K562 (cell line): ENCODE measurements at regions of chr9 and their contacts with region 1.

Region 1: DNA sequence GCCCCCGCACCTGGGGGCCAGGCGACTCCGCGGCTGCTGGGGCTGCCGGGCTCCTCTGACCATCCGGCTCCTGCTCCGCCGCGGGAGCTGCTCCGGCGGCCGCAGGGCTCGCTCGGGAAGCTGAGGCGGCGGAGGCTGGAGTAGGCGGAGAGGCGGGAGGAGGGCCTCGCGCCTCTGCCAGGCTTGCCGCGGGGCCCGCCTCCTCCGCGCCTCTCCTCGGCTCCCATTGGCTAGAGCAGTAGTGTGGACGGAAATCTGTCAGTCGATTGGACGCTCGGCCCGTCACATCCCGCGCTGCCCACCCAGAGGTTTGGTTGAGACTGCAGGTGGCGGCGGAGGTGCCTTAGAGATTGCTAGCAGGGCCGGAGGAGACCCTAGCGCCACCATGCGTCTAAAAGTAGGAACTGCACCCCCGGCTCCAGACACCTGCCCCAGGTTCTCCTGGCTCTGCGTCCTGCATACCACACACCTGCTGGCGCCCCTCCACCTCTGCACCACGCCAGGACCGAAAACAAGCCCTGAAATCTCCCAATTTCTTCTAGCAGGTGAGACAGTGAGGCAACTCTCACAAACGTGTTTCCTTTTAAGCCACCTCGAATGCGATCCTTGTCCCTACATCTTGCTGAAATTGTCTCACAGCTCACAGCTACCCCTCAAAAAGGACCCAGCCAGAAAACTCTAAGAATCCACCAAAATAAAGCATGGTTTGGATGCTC is at the start of gene SCAI:
- DNase-seq: peak; percentile 98 to 99 (median 98)
- ATAC-seq: peak; percentile 100
- H3K4me3 ChIP-seq: peak within 1 kb of the TSS; percentile 56
- H3K27ac ChIP-seq: peak within 1 kb of the TSS; percentile 34; the same call in 1 of the 3 replicates
- H3K4me1 ChIP-seq: peaks cover 0 to 8% of the 10 kb centered on the region in 2 experiments; a peak in 3 of 5 replicates
- H3K27me3 ChIP-seq: no peaks in the 10 kb centered on the region
- CTCF ChIP-seq: peak; percentile 97 to 98 (median 97)
- EP300 ChIP-seq: no peak
- POLR2A ChIP-seq: no peak; the same call in 1 of the 2 replicates
- RAD21 ChIP-seq: peak; percentile 90 to 93
- polyA plus RNA-seq, gene SCAI: 0.70 to 0.84 TPM

Region 2: GRCh38 chr9:124852829-124853531 is 290.6 kb before region 1 on chr9 and contains the start of gene WDR38:
- CTCF ChIA-PET with region 1: interaction called, 4 read pairs
- POLR2A ChIA-PET with region 1: no interaction called
- in situ Hi-C with region 1: no loop called
- intact Hi-C with region 1: loop called (anchors 1 kb)
- DNase-seq: peak; percentile 83 to 92 (median 86)
- ATAC-seq: peak; percentile 90
- H3K4me3 ChIP-seq: peak within 1 kb of the TSS; percentile 36
- H3K27ac ChIP-seq: no peak within 1 kb of the TSS
- H3K4me1 ChIP-seq: peaks cover 0 to 46% of the 10 kb centered on the region in 2 experiments; a peak in 3 of 5 replicates
- H3K27me3 ChIP-seq: no peaks in the 10 kb centered on the region
- CTCF ChIP-seq: peak; percentile 77 to 98 (median 93)
- EP300 ChIP-seq: no peak
- POLR2A ChIP-seq: no peak
- RAD21 ChIP-seq: peak; percentile 99 to 100
- polyA plus RNA-seq, gene WDR38: not detected

Region 3: DNA sequence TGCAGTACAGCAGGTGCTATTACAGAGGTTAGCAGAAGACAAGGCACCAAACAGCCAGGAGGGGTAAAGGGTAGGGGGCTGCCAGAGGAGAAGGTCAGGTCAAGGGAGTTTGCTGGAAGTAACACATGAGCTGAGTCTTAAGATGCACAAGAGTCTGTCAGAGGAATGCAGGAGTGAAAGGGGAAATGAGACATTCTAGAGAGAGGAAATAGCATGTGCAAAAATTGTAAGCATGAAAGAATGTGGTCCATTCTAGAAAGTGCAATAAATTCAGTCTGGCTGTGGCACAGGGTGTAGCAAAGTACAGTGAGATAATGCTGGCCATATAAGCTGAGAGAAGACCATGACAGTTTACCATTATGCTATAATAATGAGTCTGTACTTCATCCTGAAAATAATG is 209.2 kb before region 1 on chr9:
- CTCF ChIA-PET with region 1: no interaction called
- POLR2A ChIA-PET with region 1: no interaction called
- in situ Hi-C with region 1: loop called (anchors 10 kb)
- intact Hi-C with region 1: no loop called
- DNase-seq: no peak
- ATAC-seq: no peak
- H3K4me3 ChIP-seq: no peak overlapping the region
- H3K27ac ChIP-seq: no peak overlapping the region
- H3K4me1 ChIP-seq: no peaks in the 10 kb centered on the region
- H3K27me3 ChIP-seq: no peaks in the 10 kb centered on the region
- CTCF ChIP-seq: no peak
- EP300 ChIP-seq: no peak
- POLR2A ChIP-seq: no peak
- RAD21 ChIP-seq: no peak

Region 4: DNA sequence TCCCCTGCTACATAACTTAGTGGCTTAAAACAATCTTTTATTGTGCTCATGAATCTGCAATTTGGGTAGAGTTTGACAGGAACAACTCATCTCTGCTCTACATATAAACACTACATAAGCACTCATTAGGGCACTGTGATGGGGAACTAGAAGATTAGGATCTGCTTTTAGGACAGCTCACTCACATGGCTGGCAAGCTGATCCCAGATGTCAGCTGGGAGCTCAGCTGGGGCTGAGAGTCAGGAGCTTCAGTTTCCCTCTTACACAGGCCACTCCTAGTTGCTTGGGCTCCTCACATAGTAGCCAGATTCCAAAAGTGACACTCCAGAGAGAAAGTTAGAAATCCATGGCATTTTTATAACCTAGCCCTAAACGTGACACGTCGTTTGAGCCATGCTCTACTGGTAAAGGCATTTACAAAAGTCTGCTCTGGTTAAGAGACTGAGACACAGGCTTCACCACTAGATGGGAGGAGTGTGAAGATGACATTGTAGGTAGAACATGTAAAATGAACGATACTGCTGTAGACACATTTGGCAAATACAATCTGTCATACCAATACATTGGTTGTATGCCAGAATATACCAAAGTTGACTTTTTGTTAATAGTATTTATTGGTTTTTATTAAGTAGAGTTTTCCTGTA is 23.8 kb before region 1 on chr9:
- CTCF ChIA-PET with region 1: interaction called, 3 read pairs
- POLR2A ChIA-PET with region 1: no interaction called
- in situ Hi-C with region 1: no loop called
- intact Hi-C with region 1: loop called (anchors 2 kb)
- DNase-seq: peak in 2 of 4 experiments; percentile 17 to 44
- ATAC-seq: peak; percentile 83
- H3K4me3 ChIP-seq: no peak overlapping the region
- H3K27ac ChIP-seq: peak overlapping the region; percentile 21; the same call in 1 of the 3 replicates
- H3K4me1 ChIP-seq: peaks cover 3 to 9% of the 10 kb centered on the region in 2 experiments; a peak in 4 of 5 replicates
- H3K27me3 ChIP-seq: no peaks in the 10 kb centered on the region
- CTCF ChIP-seq: peak in 2 of 3 experiments; percentile 27 to 44; a peak in 3 of 6 replicates
- EP300 ChIP-seq: no peak
- POLR2A ChIP-seq: no peak
- RAD21 ChIP-seq: peak; percentile 8 to 43; a peak in 2 of 4 replicates